ENCODE measurements at regions of chr4 and their contacts with region 1.

Region 1: GRCh38 chr4:164779811-164780216 is 25.9 kb downstream of the SMIM31 start:
- DNase-seq: peak; percentile 17
- H3K4me3 ChIP-seq: no peak overlapping the region
- H3K27ac ChIP-seq: no peak overlapping the region
- H3K4me1 ChIP-seq: no peaks in the 10 kb centered on the region
- H3K27me3 ChIP-seq: no peaks in the 10 kb centered on the region
- CTCF ChIP-seq: peak; percentile 94 to 95

Region 2: GRCh38 chr4:164866817-164867490 is 87.1 kb after region 1 on chr4:
- CTCF ChIA-PET with region 1: no interaction called
- dilution Hi-C with region 1: no loop called
- in situ Hi-C with region 1: no loop called
- intact Hi-C with region 1: no loop called
- DNase-seq: no peak
- H3K4me3 ChIP-seq: no peak overlapping the region
- H3K27ac ChIP-seq: no peak overlapping the region
- H3K4me1 ChIP-seq: no peaks in the 10 kb centered on the region
- H3K27me3 ChIP-seq: no peaks in the 10 kb centered on the region
- CTCF ChIP-seq: no peak

Region 3: DNA sequence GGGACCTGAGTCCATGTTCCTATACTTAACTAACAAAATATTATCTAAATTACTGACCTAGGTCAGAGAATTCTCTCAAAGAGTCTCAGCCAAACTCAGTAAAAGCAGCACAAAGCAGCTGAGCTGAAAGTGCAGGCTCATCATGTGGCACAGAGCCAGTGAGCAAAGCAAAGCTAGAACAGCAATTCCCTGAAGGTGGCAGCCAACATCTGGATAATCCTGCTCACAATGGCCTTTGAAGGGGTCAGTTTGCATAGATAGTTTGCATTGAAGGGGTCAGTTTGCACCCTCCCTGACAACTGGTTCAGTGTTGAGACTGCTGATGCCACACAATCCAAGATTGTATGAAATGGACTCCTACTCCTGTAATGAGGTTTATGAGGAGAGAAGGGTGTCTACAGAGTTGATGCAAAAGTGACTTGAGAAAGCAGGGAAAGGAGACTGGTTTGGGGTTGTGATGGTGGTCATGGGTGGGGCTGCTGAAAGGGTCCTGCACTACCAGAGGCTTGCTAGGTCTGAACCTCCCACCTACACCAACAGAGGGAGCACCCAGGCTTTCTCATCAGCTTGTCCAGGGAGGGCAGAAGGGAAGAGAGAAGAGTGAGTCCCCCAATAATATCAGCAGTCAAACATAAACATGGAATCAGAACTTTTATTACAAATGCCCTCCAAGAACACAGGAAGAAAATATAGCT is 157.9 kb after region 1 on chr4:
- CTCF ChIA-PET with region 1: no interaction called
- dilution Hi-C with region 1: no loop called
- in situ Hi-C with region 1: no loop called
- intact Hi-C with region 1: loop called (anchors 1 kb)
- DNase-seq: no peak
- H3K4me3 ChIP-seq: no peak overlapping the region
- H3K27ac ChIP-seq: no peak overlapping the region
- H3K4me1 ChIP-seq: no peaks in the 10 kb centered on the region
- H3K27me3 ChIP-seq: no peaks in the 10 kb centered on the region
- CTCF ChIP-seq: peak; percentile 8 to 21

Region 4: GRCh38 chr4:164977243-164978164 is 197.7 kb after region 1 on chr4 and contains the start of gene TRIM61:
- CTCF ChIA-PET with region 1: no interaction called
- dilution Hi-C with region 1: no loop called
- in situ Hi-C with region 1: loop called (anchors 25 kb)
- intact Hi-C with region 1: no loop called
- DNase-seq: no peak
- H3K4me3 ChIP-seq: no peak within 1 kb of the TSS
- H3K27ac ChIP-seq: no peak within 1 kb of the TSS
- H3K4me1 ChIP-seq: no peaks in the 10 kb centered on the region
- H3K27me3 ChIP-seq: no peaks in the 10 kb centered on the region
- CTCF ChIP-seq: no peak
- total RNA-seq, gene TRIM61: not detected

Region 5: GRCh38 chr4:164997324-164997723 is 217.5 kb after region 1 on chr4:
- CTCF ChIA-PET with region 1: no interaction called
- dilution Hi-C with region 1: no loop called
- in situ Hi-C with region 1: loop called (anchors 25 kb)
- intact Hi-C with region 1: loop called (anchors 1 kb)
- DNase-seq: peak; percentile 38
- H3K4me3 ChIP-seq: no peak overlapping the region
- H3K27ac ChIP-seq: no peak overlapping the region
- H3K4me1 ChIP-seq: no peaks in the 10 kb centered on the region
- H3K27me3 ChIP-seq: peaks cover 2% of the 10 kb centered on the region
- CTCF ChIP-seq: peak; percentile 14 to 51

Region 6: DNA sequence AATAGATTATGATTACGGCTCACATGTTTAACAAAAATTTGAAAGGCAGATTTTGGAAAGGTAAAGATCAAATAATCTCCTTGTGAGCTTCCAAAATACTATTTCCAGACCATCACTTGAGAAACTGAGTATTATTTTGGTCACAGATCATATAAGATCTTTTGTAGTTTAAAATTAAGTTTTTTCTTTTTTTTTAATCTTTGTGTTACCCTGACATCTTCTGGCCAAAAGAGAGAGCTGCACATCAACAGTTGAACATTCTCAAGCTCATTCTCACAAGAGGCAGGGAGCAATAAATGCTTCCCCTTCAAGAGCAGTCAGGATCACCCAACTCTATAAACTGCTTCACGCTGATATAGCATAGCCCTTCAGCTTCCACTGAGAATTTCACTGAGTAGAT is 317.0 kb after region 1 on chr4:
- CTCF ChIA-PET with region 1: no interaction called
- dilution Hi-C with region 1: no loop called
- in situ Hi-C with region 1: no loop called
- intact Hi-C with region 1: loop called (anchors 2 kb)
- DNase-seq: no peak
- H3K4me3 ChIP-seq: no peak overlapping the region
- H3K27ac ChIP-seq: no peak overlapping the region
- H3K4me1 ChIP-seq: no peaks in the 10 kb centered on the region
- H3K27me3 ChIP-seq: no peaks in the 10 kb centered on the region
- CTCF ChIP-seq: peak; percentile 46 to 53

Measured in mammary epithelial cell (primary cell).